ENCODE measurements at regions of chr2 and their contacts with region 1.

Region 1: GRCh38 chr2:27703638-27704341 is 40.1 kb downstream of the SLC4A1AP start:
- DNase-seq: peak; percentile 88 to 90
- ATAC-seq: peak; percentile 77
- H3K4me3 ChIP-seq: no peak overlapping the region
- H3K27ac ChIP-seq: peak overlapping the region; percentile 42 to 93
- H3K4me1 ChIP-seq: peaks cover 2 to 5% of the 10 kb centered on the region in 2 donors
- H3K27me3 ChIP-seq: no peaks in the 10 kb centered on the region

Region 2: DNA sequence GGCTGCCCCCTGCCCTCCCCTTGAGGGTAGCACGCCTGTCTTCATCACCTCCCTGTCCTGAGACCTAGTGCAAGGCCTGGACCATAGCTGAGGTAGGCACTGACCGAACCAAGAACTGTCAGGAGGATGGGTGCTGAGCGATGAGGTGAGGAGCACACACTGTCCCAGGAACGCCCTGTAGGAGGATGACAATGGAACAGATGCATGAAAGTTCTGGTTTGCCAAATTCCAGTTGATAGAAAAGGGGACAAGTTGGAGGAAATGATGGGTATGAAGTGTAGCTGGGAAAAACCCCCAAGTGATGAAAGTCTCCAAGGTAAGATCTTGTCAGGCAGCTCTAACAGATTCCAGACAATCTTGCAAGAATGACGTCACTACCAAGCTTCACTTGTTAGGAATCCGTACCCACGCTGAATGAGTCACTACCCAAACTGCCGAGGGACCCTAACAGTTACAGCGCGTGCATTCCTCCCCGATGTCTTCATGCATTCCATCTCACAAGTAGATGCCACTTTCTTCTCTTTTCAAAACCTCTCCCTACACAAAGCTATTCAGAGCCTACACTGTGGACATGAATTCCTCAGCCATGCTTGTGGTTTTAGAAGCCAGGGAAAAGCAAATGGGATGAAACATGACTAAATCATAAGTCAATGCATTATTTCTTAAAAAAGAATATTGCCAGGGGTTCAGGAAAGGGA is 95.3 kb after region 1 on chr2:
- intact Hi-C with region 1: loop called in 1 of 2 experiments (anchors 2 kb)
- DNase-seq: peak; percentile 87 to 88
- ATAC-seq: peak; percentile 82
- H3K4me3 ChIP-seq: no peak overlapping the region
- H3K27ac ChIP-seq: peak overlapping the region; percentile 79 to 99
- H3K4me1 ChIP-seq: peaks cover 6 to 21% of the 10 kb centered on the region in 2 donors
- H3K27me3 ChIP-seq: no peaks in the 10 kb centered on the region

Region 3: GRCh38 chr2:27954771-27955383 is 251.1 kb after region 1 on chr2:
- intact Hi-C with region 1: loop called (anchors 10 kb)
- DNase-seq: peak in 1 of 2 donors; percentile 74
- ATAC-seq: peak; percentile 90
- H3K4me3 ChIP-seq: no peak overlapping the region
- H3K27ac ChIP-seq: peak overlapping the region; percentile 75 to 82
- H3K4me1 ChIP-seq: peaks cover 5 to 8% of the 10 kb centered on the region in 2 donors
- H3K27me3 ChIP-seq: no peaks in the 10 kb centered on the region

Region 4: DNA sequence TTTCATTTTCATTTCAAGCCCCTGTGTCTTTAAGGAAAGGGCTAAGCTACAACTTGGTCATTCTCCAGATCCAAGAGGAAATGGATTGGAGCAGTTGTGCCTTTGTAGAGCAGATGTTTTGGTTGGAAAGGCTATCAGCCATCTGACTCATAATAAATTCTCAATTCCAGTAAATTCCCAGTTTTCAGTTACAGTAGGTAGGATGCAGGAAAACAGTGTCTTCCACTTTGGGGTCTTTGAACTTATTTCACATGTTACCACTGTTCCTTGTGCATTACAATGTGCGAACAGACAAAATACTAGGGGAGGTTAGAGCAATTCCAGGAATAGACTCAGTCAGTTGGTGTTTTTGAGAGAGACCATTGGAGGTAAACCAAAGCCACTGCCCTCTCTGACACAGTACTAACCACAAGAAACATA is 398.7 kb after region 1 on chr2:
- intact Hi-C with region 1: loop called in 1 of 2 experiments (anchors 10 kb)
- DNase-seq: no peak
- ATAC-seq: peak; percentile 82
- H3K4me3 ChIP-seq: no peak overlapping the region
- H3K27ac ChIP-seq: peak overlapping the region; percentile 43 to 57
- H3K4me1 ChIP-seq: peaks cover 0 to 7% of the 10 kb centered on the region in 2 donors
- H3K27me3 ChIP-seq: no peaks in the 10 kb centered on the region

Region 5: GRCh38 chr2:28342081-28342967 is 638.5 kb after region 1 on chr2:
- intact Hi-C with region 1: loop called in 1 of 2 experiments (anchors 5 kb)
- DNase-seq: peak; percentile 87 to 89
- ATAC-seq: peak; percentile 78
- H3K4me3 ChIP-seq: no peak overlapping the region
- H3K27ac ChIP-seq: peak overlapping the region; percentile 19 to 90
- H3K4me1 ChIP-seq: peaks cover 0 to 4% of the 10 kb centered on the region in 2 donors
- H3K27me3 ChIP-seq: no peaks in the 10 kb centered on the region

Region 6: DNA sequence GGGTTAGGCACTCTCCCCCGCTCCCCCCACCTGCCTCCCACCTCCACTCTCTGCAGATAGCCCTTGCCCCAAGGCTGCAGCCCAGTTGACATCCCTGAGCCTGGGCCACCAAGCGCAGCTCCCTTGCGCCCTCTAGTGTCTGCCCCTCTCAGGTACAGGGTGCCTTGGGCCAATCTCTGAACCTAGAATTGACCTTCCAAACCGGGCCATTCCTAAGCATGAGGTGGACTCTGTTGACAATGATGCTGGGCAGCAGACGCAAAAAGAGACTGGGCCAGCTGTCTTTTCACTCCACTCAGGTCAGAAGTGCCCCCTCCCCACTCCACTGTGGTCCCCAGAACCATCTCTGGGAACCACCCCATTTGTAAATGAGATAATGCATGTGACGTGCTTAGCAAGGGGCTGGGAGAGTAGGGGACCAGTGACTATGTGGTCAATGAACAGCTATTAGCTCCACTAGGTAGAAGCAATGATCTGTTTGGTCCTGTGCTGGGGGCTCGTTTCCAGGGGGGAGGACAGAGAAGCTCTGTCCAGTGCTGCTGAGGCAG is 748.8 kb after region 1 on chr2:
- intact Hi-C with region 1: loop called (anchors 1 to 5 kb)
- DNase-seq: peak; percentile 85 to 94
- ATAC-seq: peak; percentile 86
- H3K4me3 ChIP-seq: no peak overlapping the region
- H3K27ac ChIP-seq: no peak overlapping the region
- H3K4me1 ChIP-seq: no peaks in the 10 kb centered on the region
- H3K27me3 ChIP-seq: no peaks in the 10 kb centered on the region